Aorta (tissue), 5 donors: ENCODE measurements at regions of chr21 and their contacts with region 1.

Region 1: DNA sequence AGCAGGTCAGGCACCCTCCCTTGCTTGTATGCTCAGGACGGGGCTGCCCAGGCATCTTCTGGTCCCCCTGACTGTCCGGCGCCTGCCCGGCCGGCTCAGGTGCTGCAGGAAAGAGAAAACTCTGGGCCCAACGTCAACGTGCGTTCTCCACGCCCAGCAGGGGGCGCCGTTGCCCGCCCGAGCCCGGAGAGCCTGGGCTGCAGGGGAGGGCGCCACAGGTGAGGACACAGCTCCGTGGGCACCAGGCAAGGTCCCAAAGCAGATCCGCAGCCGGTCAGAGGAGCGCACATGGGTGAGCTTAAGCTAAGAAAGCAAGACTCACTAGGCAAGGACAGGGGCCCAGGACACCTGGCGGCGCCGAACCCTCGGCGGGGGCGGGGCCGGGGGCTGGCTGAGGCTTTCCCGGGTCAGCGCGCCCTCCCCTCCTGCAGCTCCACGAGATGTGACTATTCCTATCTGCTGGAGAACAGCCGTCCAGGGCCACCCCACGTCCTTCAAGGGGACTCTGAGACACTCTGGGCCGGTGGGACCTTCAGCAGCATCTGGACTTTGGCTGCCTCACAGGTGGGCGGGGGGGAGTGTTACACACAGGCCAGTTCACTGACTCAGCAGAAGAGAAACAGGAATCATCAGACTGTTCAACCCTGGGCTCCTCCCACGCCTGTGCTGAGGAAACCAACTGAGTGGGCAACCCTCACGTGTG is 29.3 kb downstream of the KRTAP10-1 start:
- DNase-seq: peak; percentile 72 to 84
- ATAC-seq: no peak
- H3K4me3 ChIP-seq: no peak overlapping the region
- H3K27ac ChIP-seq: no peak overlapping the region
- H3K4me1 ChIP-seq: no peaks in the 10 kb centered on the region
- H3K27me3 ChIP-seq: no peaks in the 10 kb centered on the region

Region 2: GRCh38 chr21:44267655-44268142 is 243.0 kb before region 1 on chr21:
- intact Hi-C with region 1: no loop called
- DNase-seq: peak in 1 of 2 donors; percentile 48
- ATAC-seq: no peak
- H3K4me3 ChIP-seq: no peak overlapping the region
- H3K27ac ChIP-seq: no peak overlapping the region
- H3K4me1 ChIP-seq: no peaks in the 10 kb centered on the region
- H3K27me3 ChIP-seq: no peaks in the 10 kb centered on the region

Region 3: GRCh38 chr21:44444286-44444931 is 66.2 kb before region 1 on chr21:
- intact Hi-C with region 1: no loop called
- DNase-seq: peak in 1 of 2 donors; percentile 49
- ATAC-seq: no peak
- H3K4me3 ChIP-seq: no peak overlapping the region
- H3K27ac ChIP-seq: no peak overlapping the region
- H3K4me1 ChIP-seq: no peaks in the 10 kb centered on the region
- H3K27me3 ChIP-seq: no peaks in the 10 kb centered on the region

Region 4: DNA sequence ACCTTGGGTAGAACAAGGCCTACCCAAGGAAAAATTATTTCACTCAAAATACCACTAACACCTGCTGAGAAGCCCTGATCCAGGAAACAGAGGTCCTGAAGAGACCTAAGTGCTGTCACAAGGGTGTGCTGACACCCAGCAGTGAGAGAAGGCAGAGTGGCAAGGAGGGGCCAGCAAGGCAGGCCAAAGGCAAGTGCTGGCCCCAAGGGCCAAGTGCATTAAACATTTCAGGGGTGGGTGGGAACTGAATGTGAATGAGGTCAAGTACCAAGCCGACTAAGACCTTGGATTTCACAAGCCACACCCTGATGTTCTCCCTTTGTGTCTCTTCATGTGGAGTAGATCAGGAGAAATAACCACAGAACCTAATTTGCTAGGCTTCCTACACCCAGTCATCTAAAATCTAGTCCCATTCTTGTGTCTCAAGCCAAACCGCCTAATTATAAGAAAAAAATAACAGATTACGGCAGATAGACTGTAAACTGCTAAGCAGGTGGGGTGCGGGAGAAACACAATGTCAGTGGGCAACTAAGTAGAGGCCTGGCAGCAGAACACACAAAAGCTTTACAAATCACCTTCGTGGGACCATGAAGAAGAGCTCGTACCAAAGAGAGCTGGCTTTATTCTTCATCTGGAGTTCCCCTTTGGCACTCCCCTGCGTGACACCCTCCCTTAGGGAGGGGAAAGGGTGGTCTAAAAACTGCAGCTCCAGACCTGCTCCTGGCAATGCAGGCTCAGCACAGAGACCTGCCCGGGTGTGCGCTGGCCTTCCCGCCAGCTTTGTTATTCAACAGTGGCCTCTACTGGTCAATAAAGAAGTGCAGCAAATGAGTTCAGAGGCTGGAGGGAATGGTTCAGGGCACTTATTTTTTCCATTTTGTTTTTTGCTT is 282.3 kb after region 1 on chr21:
- intact Hi-C with region 1: loop called in 1 of 2 experiments (anchors 10 kb)
- DNase-seq: no peak
- ATAC-seq: peak; percentile 85
- H3K4me3 ChIP-seq: no peak overlapping the region
- H3K27ac ChIP-seq: no peak overlapping the region
- H3K4me1 ChIP-seq: no peaks in the 10 kb centered on the region
- H3K27me3 ChIP-seq: no peaks in the 10 kb centered on the region

Region 5: DNA sequence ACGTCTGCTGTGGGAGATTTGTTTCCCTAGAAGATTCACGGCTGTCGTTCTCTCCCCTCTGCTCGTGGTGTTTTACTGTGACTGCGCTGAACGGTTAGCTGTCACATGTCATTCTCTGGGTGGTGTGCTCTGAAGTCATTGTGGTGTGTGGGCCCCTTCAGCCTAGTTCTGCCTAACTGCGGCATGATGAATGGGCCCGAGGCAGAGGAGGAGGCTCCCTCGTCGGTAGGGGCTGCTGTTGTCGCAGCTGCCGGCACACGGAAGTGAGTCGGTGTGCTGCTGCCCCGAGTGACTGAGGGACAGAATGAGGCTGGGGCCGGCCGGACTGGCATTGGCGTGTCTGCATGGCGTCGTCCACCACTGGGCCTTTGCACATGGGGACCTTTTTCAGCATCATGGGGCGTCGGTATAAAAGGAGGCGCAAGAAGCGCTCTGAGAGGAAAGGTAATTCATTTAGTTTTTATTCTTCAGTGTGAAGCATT is 641.6 kb after region 1 on chr21:
- intact Hi-C with region 1: no loop called
- DNase-seq: peak; percentile 76 to 83
- ATAC-seq: peak; percentile 62
- H3K4me3 ChIP-seq: no peak overlapping the region
- H3K27ac ChIP-seq: no peak overlapping the region
- H3K4me1 ChIP-seq: no peaks in the 10 kb centered on the region
- H3K27me3 ChIP-seq: no peaks in the 10 kb centered on the region